MCF 10A (cell line): ENCODE measurements at regions of chr19 and their contacts with region 1.

Region 1: GRCh38 chr19:14136509-14137281 is at the start of gene ASF1B:
- DNase-seq: peak; percentile 100
- H3K4me3 Mint-ChIP-seq: peak within 1 kb of the TSS; percentile 82
- H3K27ac Mint-ChIP-seq: peak within 1 kb of the TSS; percentile 91
- H3K4me1 Mint-ChIP-seq: peaks cover 30% of the 10 kb centered on the region
- H3K27me3 Mint-ChIP-seq: no peaks in the 10 kb centered on the region
- CTCF ChIP-seq: peak; percentile 74
- total RNA-seq, gene ASF1B: 6.5 and 7.0 TPM in 2 replicates

Region 2: GRCh38 chr19:13880059-13881043 is 256.3 kb before region 1 on chr19:
- CTCF ChIA-PET with region 1: interaction called, 6 read pairs
- POLR2A ChIA-PET with region 1: no interaction called
- intact Hi-C with region 1: loop called (anchors 1 kb)
- DNase-seq: peak; percentile 97
- H3K4me3 Mint-ChIP-seq: peak overlapping the region; percentile 38
- H3K27ac Mint-ChIP-seq: peak overlapping the region; percentile 63
- H3K4me1 Mint-ChIP-seq: no peaks in the 10 kb centered on the region
- H3K27me3 Mint-ChIP-seq: no peaks in the 10 kb centered on the region
- CTCF ChIP-seq: peak; percentile 98

Region 3: GRCh38 chr19:13987101-13987890 is 149.4 kb before region 1 on chr19:
- CTCF ChIA-PET with region 1: no interaction called
- POLR2A ChIA-PET with region 1: no interaction called
- intact Hi-C with region 1: no loop called
- DNase-seq: no peak
- H3K4me3 Mint-ChIP-seq: no peak overlapping the region
- H3K27ac Mint-ChIP-seq: no peak overlapping the region
- H3K4me1 Mint-ChIP-seq: peaks cover 5% of the 10 kb centered on the region
- H3K27me3 Mint-ChIP-seq: no peaks in the 10 kb centered on the region
- CTCF ChIP-seq: no peak

Region 4: GRCh38 chr19:14117668-14118164 is 19.0 kb before region 1 on chr19 and contains the start of gene PRKACA:
- CTCF ChIA-PET with region 1: interaction called, 17 read pairs
- POLR2A ChIA-PET with region 1: interaction called, 22 read pairs
- intact Hi-C with region 1: no loop called
- DNase-seq: peak; percentile 99
- H3K4me3 Mint-ChIP-seq: peak within 1 kb of the TSS; percentile 83
- H3K27ac Mint-ChIP-seq: peak within 1 kb of the TSS; percentile 93
- H3K4me1 Mint-ChIP-seq: peaks cover 18% of the 10 kb centered on the region
- H3K27me3 Mint-ChIP-seq: no peaks in the 10 kb centered on the region
- CTCF ChIP-seq: no peak
- total RNA-seq, gene PRKACA: 44.7 and 49.8 TPM in 2 replicates

Region 5: DNA sequence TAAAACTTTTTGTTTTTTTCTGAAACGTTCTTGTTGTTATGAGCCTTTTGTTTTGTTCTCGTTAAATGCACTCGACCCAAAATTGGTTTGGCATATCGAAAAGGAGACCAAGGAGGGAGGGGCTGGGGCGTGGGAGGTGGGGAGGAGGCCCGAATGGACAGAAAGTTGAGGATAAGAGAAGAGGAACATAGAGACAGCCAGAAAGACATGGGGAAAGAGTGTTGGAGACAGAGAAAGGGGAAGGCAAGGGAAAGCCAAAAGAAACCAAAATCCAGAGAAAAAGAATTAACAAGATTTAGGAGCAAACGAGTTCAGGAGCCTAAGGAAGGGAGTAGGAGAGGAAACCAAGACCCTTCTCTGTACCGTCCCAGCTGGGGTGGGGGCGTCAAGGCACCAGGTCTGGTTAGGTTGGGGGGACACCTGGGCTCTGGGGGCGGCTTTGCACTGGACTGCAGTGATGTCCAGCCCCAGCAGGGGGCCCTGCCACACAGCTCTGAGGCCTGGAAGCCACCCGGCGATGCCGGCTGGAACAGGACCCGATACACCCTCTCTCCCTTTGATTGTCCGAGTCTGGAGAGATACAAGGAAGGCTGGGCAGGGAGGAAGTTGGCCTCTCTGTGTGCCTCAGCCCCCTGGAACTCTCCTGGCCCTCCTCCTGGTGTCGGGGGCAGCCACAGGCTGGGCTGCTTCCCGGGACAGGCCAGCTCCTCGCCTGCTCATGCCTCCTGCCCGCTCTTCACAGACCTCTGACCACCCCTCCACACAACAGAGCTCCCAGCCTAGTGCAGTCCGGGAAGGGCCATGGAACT is 11.3 kb after region 1 on chr19:
- CTCF ChIA-PET with region 1: interaction called, 10 read pairs
- POLR2A ChIA-PET with region 1: interaction called, 11 read pairs
- intact Hi-C with region 1: no loop called
- DNase-seq: peak; percentile 44
- H3K4me3 Mint-ChIP-seq: no peak overlapping the region
- H3K27ac Mint-ChIP-seq: no peak overlapping the region
- H3K4me1 Mint-ChIP-seq: peaks cover 15% of the 10 kb centered on the region
- H3K27me3 Mint-ChIP-seq: no peaks in the 10 kb centered on the region
- CTCF ChIP-seq: peak; percentile 62

Region 6: GRCh38 chr19:14383661-14384555 is 247.2 kb after region 1 on chr19:
- CTCF ChIA-PET with region 1: interaction called, 4 read pairs
- POLR2A ChIA-PET with region 1: interaction called, 23 read pairs
- intact Hi-C with region 1: no loop called
- DNase-seq: peak; percentile 50
- H3K4me3 Mint-ChIP-seq: peak overlapping the region; percentile 63
- H3K27ac Mint-ChIP-seq: peak overlapping the region; percentile 85
- H3K4me1 Mint-ChIP-seq: peaks cover 34% of the 10 kb centered on the region
- H3K27me3 Mint-ChIP-seq: no peaks in the 10 kb centered on the region
- CTCF ChIP-seq: no peak

Region 7: DNA sequence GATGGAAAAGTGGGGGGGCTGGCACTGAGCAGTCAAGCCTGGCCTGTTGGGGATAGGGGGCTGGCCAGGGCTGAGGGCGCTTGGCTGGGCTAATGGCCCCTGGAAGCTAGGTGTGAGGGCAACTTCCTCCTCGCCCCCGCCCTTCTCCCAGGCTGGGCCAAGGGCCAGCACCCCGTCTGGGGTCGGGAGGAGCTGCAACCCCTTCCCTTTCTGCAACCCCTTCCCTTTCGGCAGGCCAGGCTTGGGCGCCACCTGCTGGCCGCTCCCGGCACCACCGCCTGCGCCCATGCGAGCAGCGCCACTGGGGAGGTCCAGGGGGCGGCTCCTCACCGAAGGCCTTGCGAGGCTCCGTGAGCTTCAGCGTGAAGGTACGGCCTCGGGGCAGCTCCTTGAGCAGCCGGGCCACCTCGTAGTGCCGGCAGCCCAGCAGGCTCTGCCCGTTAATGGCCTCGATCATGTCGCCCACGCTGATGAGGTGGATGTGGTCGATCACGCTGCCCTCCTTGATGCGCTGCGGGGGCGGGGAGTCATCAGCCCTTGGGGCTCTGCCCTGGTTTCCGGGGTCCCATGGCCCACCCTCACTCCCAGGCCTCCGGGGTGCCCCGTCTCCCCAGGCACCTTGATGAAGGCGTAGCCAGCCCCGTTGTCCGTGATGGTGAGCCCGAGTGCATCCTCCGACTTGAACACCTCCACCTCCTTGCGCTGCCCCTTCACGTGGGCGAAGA is 343.4 kb after region 1 on chr19:
- CTCF ChIA-PET with region 1: interaction called, 13 read pairs
- POLR2A ChIA-PET with region 1: no interaction called
- intact Hi-C with region 1: loop called (anchors 5 kb)
- DNase-seq: no peak
- H3K4me3 Mint-ChIP-seq: no peak overlapping the region
- H3K27ac Mint-ChIP-seq: no peak overlapping the region
- H3K4me1 Mint-ChIP-seq: peaks cover 14% of the 10 kb centered on the region
- H3K27me3 Mint-ChIP-seq: no peaks in the 10 kb centered on the region
- CTCF ChIP-seq: peak; percentile 78